H1 (cell line): ENCODE measurements at regions of chr10 and their contacts with region 1.

Region 1: GRCh38 chr10:72319416-72320254 is 35.1 kb downstream of the DNAJB12 start:
- DNase-seq: peak in 1 of 2 experiments; percentile 83
- H3K4me3 ChIP-seq: peak overlapping the region; percentile 14 to 55 (median 22); a peak in 5 of 8 replicates
- H3K27ac ChIP-seq: no peak overlapping the region
- H3K4me1 ChIP-seq: peaks cover 17 to 39% (median 26%) of the 10 kb centered on the region in 4 experiments
- H3K27me3 ChIP-seq: no peaks in the 10 kb centered on the region
- CTCF ChIP-seq: no peak
- EP300 ChIP-seq: peak in 1 of 2 experiments; percentile 56; a peak in 1 of 3 replicates
- POLR2A ChIP-seq: no peak; a peak in 1 of 3 replicates
- RAD21 ChIP-seq: no peak; a peak in 1 of 4 replicates

Region 2: GRCh38 chr10:72215652-72216549 is 103.7 kb before region 1 on chr10 and contains the starts of genes ANAPC16 and ASCC1:
- CTCF ChIA-PET with region 1: no interaction called
- POLR2A ChIA-PET with region 1: interaction called, 19 read pairs
- DNase-seq: peak; percentile 75 to 98
- H3K4me3 ChIP-seq: peak within 1 kb of the TSS; percentile 76 to 85 (median 81)
- H3K27ac ChIP-seq: peak within 1 kb of the TSS; percentile 98
- H3K4me1 ChIP-seq: peaks cover 0 to 7% (median 3%) of the 10 kb centered on the region in 4 experiments; a peak in 3 of 7 replicates
- H3K27me3 ChIP-seq: no peaks in the 10 kb centered on the region
- CTCF ChIP-seq: no peak
- EP300 ChIP-seq: no peak
- POLR2A ChIP-seq: peak; percentile 95 to 99
- RAD21 ChIP-seq: 0 out of 4 replicates have a peak, but pooled peaks of 1 of the 2 experiments have one; percentile 0
- total RNA-seq, gene ANAPC16: 56.2 and 57.4 TPM in 2 replicates
- total RNA-seq, gene ASCC1: 30.2 and 35.8 TPM in 2 replicates

Region 3: DNA sequence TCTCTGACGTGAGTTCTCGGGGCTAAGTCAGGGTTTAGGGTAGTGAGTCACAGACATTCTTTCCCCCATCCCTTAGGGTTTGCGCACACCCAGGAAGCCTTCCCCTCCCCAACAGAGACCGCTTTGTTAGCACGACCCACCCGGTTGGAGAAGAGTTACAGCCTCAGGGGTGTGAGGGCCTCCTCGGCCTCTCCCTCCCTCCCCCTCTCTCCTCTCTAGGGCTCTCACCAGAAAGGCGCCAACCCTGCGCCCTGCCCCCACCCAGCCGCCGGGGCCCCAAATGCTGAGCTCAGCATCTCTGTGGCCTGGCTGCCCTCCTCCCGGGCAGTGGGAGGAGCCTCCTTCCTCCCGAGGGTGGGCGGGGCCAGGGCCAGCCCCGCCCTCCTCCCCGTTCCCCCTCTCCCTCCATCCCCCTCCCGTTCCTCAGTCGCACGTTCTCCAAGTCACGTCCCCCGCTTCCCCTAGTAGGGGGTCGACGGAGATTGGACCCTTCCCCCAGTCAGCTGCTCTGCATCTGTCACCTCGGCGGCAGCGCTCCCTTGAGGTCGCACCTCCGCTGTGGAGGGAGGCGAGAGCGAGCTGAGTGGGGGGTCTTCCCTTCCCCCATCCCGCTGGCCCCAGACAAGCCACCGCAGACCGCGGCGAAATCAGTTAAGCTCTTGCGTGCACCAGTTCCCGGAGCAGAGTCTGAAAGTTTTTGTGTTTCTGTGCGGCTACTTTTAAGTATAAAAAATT is 58.9 kb before region 1 on chr10:
- CTCF ChIA-PET with region 1: interaction called, 4 read pairs
- POLR2A ChIA-PET with region 1: interaction called, 108 read pairs
- DNase-seq: peak; percentile 93 to 96
- H3K4me3 ChIP-seq: peak overlapping the region; percentile 31 to 56 (median 46); a peak in 7 of 8 replicates
- H3K27ac ChIP-seq: peak overlapping the region; percentile 87
- H3K4me1 ChIP-seq: peaks cover 17 to 34% (median 24%) of the 10 kb centered on the region in 4 experiments
- H3K27me3 ChIP-seq: no peaks in the 10 kb centered on the region
- CTCF ChIP-seq: peak; percentile 19 to 47 (median 21); a peak in 3 of 4 replicates
- EP300 ChIP-seq: peak; percentile 14 to 68; a peak in 2 of 3 replicates
- POLR2A ChIP-seq: peak in 1 of 2 experiments; percentile 68; a peak in 1 of 3 replicates
- RAD21 ChIP-seq: peak; percentile 23 to 54; a peak in 2 of 4 replicates

Region 4: GRCh38 chr10:72292223-72292691 is 27.4 kb before region 1 on chr10:
- CTCF ChIA-PET with region 1: interaction called, 10 read pairs
- POLR2A ChIA-PET with region 1: interaction called, 9 read pairs
- DNase-seq: no peak
- H3K4me3 ChIP-seq: no peak overlapping the region
- H3K27ac ChIP-seq: no peak overlapping the region
- H3K4me1 ChIP-seq: peaks cover 4 to 11% (median 7%) of the 10 kb centered on the region in 4 experiments
- H3K27me3 ChIP-seq: no peaks in the 10 kb centered on the region; a peak in 1 of 7 replicates
- CTCF ChIP-seq: no peak
- EP300 ChIP-seq: no peak
- POLR2A ChIP-seq: no peak
- RAD21 ChIP-seq: no peak

Region 5: DNA sequence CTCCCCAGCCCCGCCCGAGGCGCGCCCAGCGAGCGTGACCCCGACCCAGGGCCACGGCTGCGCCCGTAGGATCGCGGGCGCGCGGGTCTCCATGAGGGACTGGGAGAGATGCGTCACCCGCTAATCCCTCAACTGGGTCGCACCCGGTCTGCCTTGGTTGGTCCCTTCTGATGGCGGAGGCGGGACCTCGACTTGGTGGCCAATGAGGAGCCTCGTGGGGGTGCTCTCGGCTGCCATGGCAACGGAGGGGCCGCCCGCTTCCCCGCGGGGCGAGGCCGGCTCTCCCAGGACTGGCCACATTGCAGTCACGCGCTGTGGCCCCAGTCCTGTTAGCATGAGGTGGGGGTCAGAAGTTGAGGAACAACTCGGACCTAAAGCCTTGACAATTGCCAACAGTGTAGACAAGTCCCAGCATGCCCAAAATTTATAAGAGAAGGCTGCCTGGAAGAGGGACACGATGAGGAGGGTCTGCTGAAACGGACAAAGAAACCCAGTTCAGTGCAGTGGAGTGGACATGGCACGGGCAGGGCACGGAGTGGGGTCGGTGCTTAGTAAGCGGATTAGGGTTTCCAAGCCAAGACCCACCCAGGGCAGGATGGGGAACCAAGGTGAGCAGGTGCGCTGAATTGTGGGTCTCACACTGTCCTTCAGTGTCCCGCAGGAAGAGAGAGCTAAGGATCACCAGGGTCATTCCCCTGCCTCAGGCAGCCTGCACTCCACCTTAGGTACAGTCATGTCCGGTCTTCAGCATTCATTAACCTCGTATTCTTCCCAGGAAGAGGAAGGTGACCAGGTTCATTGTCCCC is 21.5 kb before region 1 on chr10:
- CTCF ChIA-PET with region 1: interaction called, 10 read pairs
- POLR2A ChIA-PET with region 1: interaction called, 26 read pairs
- DNase-seq: peak; percentile 77 to 96
- H3K4me3 ChIP-seq: peak overlapping the region; percentile 43 to 70 (median 56)
- H3K27ac ChIP-seq: peak overlapping the region; percentile 51
- H3K4me1 ChIP-seq: peaks cover 5 to 21% (median 12%) of the 10 kb centered on the region in 4 experiments
- H3K27me3 ChIP-seq: no peaks in the 10 kb centered on the region; a peak in 1 of 7 replicates
- CTCF ChIP-seq: peak in 1 of 3 experiments; percentile 5; a peak in 1 of 4 replicates
- EP300 ChIP-seq: no peak
- POLR2A ChIP-seq: peak in 1 of 2 experiments; percentile 13; a peak in 1 of 3 replicates
- RAD21 ChIP-seq: no peak

Region 6: DNA sequence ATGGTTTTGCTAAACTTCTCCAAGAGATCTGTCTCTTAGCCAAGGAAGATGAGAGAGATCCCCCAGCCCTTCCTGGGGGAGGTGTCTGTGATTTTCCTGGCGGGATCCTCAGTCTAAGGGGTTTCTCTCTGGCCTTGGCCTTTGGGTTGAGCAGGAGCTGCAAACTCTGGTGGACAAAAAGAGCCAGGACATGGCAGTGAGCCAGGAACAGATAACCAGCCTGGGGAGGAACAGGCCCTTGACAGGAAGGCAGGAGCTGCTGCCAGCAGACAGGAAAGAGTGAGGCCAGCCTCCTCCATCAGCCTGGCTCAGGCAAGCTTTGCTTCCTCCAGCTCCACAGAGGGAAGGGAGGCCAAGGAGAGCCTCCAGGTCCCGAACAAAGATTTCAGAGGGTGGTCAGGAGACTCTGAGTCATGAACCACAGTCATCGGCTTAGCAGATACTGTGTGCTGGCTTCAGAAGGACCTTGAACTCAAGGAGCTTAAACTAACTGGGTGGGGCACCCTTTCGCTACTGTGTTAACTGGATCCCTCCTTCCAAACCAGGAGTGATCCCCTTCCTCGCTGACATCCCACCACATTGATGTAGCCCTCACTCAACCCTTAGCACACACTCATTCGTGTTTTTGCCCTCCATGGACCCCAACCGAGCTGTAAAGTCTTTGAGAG is 11.2 kb before region 1 on chr10:
- CTCF ChIA-PET with region 1: interaction called, 9 read pairs
- POLR2A ChIA-PET with region 1: interaction called, 38 read pairs
- DNase-seq: no peak
- H3K4me3 ChIP-seq: no peak overlapping the region
- H3K27ac ChIP-seq: no peak overlapping the region
- H3K4me1 ChIP-seq: peaks cover 0 to 14% (median 12%) of the 10 kb centered on the region in 4 experiments; a peak in 6 of 7 replicates
- H3K27me3 ChIP-seq: peaks cover 0 to 3% (median 0%) of the 10 kb centered on the region in 4 experiments; a peak in 1 of 7 replicates
- CTCF ChIP-seq: no peak
- EP300 ChIP-seq: no peak
- POLR2A ChIP-seq: no peak
- RAD21 ChIP-seq: no peak

Region 7: DNA sequence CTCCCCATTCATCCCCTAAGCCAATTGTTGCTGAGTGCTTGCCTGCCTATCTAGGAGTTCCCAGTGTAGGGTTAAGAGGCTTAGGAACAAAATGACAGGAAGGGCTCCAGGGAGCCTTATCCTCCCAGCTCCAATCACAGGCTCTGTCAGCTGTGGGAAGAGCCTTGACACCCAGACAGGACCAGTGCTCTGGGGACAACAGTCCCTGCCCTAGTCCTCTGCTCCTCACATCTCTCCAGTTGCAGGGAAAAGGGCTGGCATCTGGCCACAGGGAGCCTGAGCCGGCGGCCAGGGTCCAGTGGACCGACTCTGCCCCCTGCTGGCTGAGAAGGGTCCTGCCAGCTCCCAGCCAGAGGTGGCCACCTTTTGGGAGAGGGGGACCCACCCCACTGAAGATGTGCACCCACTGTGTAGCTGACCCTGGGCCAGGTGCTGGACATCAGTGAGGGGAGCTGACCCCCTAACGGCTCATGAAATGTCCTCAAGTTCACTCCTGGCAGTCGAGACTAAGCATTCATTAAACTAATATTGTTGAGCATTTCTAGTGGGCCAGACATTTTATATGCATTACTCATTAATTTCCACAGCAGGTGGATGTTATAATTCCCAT is 17.5 kb after region 1 on chr10:
- CTCF ChIA-PET with region 1: interaction called, 7 read pairs
- POLR2A ChIA-PET with region 1: interaction called, 38 read pairs
- DNase-seq: peak in 1 of 2 experiments; percentile 91
- H3K4me3 ChIP-seq: no peak overlapping the region
- H3K27ac ChIP-seq: no peak overlapping the region
- H3K4me1 ChIP-seq: peaks cover 0 to 22% (median 11%) of the 10 kb centered on the region in 4 experiments; a peak in 6 of 7 replicates
- H3K27me3 ChIP-seq: no peaks in the 10 kb centered on the region
- CTCF ChIP-seq: peak in 2 of 3 experiments; percentile 92 to 93; a peak in 3 of 4 replicates
- EP300 ChIP-seq: no peak
- POLR2A ChIP-seq: no peak
- RAD21 ChIP-seq: peak; percentile 91 to 95